Heart left ventricle (tissue), 16 donors: ENCODE measurements at regions of chr7 and their contacts with region 1.

Region 1: DNA sequence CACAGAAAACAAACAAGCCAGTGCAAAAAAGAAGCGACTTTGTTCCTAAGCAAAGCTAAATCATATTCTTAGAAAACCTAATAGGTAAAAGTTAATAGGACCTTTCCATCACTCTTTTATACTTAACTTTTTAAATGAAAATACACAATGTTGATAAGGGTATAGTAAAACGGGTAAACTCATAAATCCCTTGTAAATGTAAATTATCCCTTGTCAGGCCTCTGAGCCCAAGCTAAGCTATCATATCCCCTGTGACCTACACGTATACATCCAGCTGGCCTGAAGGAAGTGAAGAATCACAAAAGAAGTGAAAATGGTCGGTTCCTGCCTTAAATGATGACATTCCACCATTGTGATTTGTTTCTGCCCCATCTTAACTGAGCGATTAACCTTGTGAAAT is 76.4 kb downstream of the GSAP start:
- DNase-seq: no peak
- ATAC-seq: no peak
- H3K4me3 ChIP-seq: no peak overlapping the region
- H3K27ac ChIP-seq: no peak overlapping the region
- H3K4me1 ChIP-seq: peaks cover 0 to 33% (median 7%) of the 10 kb centered on the region in 12 donors
- H3K27me3 ChIP-seq: no peaks in the 10 kb centered on the region
- CTCF ChIP-seq: no peak
- POLR2A ChIP-seq: no peak

Region 2: GRCh38 chr7:77293046-77293445 is 46.7 kb before region 1 on chr7:
- intact Hi-C with region 1: loop called in 1 of 10 experiments (anchors 5 kb)
- DNase-seq: no peak
- ATAC-seq: no peak
- H3K4me3 ChIP-seq: no peak overlapping the region
- H3K27ac ChIP-seq: no peak overlapping the region
- H3K4me1 ChIP-seq: no peaks in the 10 kb centered on the region
- H3K27me3 ChIP-seq: no peaks in the 10 kb centered on the region
- CTCF ChIP-seq: peak in 1 of 12 donors; percentile 5
- POLR2A ChIP-seq: no peak